Colonic mucosa (tissue), 4 donors: ENCODE measurements at regions of chr2 and their contacts with region 1.

Region 1: GRCh38 chr2:151437630-151438029 is 27.9 kb downstream of the RIF1 start:
- DNase-seq: no peak
- H3K4me3 ChIP-seq: no peak overlapping the region
- H3K27ac ChIP-seq: peak overlapping the region; percentile 45
- H3K4me1 ChIP-seq: peaks cover 3% of the 10 kb centered on the region
- H3K27me3 ChIP-seq: no peaks in the 10 kb centered on the region
- CTCF ChIP-seq: peak; percentile 79

Region 2: GRCh38 chr2:151261231-151261976 is 176.2 kb before region 1 on chr2 and contains the start of gene RBM43:
- intact Hi-C with region 1: loop called (anchors 10 kb)
- DNase-seq: peak; percentile 88
- H3K4me3 ChIP-seq: peak within 1 kb of the TSS; percentile 69
- H3K27ac ChIP-seq: peak within 1 kb of the TSS; percentile 96
- H3K4me1 ChIP-seq: no peaks in the 10 kb centered on the region
- H3K27me3 ChIP-seq: no peaks in the 10 kb centered on the region
- CTCF ChIP-seq: no peak
- total RNA-seq, gene RBM43: 2.4 to 3.8 TPM

Region 3: DNA sequence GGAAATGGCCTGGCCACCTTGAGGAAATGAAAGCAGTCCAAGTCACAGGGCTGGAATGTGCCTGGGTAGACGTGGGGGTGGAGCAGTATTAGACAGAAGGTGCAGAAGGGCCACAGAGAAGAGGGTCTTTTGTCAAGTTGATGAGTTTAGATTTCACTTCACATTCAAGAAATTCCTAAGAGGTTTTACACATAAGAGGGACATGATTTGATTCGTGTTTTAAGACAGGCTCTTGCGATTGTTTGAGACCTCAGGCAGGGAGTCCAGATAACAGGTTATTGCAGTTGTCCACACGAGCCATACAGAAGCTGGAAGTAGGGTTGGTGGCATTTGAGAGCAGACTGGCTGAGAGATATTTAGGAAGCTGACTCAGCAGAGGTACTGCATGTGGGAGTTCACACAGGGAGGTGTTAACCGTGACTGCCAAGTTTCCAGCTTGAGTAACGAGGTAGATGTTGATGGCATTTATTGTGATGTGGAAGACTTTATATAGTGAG is 232.0 kb after region 1 on chr2:
- intact Hi-C with region 1: no loop called
- DNase-seq: no peak
- H3K4me3 ChIP-seq: no peak overlapping the region
- H3K27ac ChIP-seq: no peak overlapping the region
- H3K4me1 ChIP-seq: no peaks in the 10 kb centered on the region
- H3K27me3 ChIP-seq: no peaks in the 10 kb centered on the region
- CTCF ChIP-seq: no peak